A549 (cell line): ENCODE measurements at regions of chr2 and their contacts with region 1.

Region 1: DNA sequence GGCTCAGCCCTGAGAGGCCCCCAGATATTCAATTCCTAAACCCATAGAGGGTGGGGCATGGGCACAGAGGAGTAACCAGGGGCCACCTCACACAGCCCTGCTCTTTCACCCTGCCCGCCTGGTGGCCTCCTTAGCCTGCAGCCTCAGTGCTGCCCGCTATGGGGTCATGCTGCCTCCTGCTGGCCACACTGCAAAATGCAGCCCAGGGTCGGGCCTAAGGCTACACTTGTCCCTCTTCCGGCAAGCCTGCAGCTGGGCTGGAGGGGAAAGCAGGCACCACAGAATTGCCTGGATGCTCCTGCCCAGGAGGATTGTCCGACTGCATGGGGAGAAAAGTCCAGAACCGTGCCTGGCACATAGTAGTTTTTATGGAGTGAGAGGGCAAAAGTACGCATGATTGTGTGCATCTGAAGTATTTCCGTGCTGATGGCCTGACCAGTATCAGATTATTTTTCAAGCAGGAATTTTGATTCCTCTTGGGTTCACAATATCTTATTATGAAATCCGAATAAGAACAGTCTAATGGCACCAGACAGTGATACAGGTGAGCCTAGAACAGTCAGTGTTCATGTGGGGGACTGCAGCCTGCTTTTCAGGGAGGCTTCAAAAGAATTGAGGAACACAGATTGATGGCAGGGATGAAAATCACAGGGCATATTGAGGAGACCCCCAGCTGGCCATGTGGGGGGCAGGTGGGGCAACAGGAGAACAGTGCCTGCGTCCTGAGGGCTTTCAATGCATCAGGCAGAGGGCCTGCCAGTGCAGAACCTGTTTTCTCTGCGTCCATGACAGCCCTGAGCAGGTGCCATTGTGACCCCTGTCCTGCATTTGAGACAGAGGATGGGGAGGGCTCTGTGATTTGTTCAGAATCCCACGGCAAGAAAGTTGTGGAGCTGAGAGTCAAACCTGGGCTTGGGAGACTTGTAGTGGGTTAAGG is 51.2 kb upstream of the ALPP start:
- DNase-seq: peak; percentile 49 to 75
- ATAC-seq: peak; percentile 63 to 92
- H3K4me3 ChIP-seq: no peak overlapping the region
- H3K27ac ChIP-seq: no peak overlapping the region
- H3K4me1 ChIP-seq: no peaks in the 10 kb centered on the region
- CTCF ChIP-seq: peak; percentile 72
- EP300 ChIP-seq: no peak
- POLR2A ChIP-seq: no peak
- RAD21 ChIP-seq: peak; percentile 73 to 79

Region 2: GRCh38 chr2:232292395-232293154 is 34.8 kb before region 1 on chr2:
- CTCF ChIA-PET with region 1: interaction called, 20 read pairs
- POLR2A ChIA-PET with region 1: no interaction called
- DNase-seq: peak; percentile 47 to 64
- ATAC-seq: peak; percentile 82 to 95
- H3K4me3 ChIP-seq: no peak overlapping the region
- H3K27ac ChIP-seq: no peak overlapping the region
- H3K4me1 ChIP-seq: no peaks in the 10 kb centered on the region
- CTCF ChIP-seq: peak; percentile 62
- EP300 ChIP-seq: no peak
- POLR2A ChIP-seq: no peak
- RAD21 ChIP-seq: peak; percentile 36 to 49; a peak in 4 of 5 replicates

Region 3: DNA sequence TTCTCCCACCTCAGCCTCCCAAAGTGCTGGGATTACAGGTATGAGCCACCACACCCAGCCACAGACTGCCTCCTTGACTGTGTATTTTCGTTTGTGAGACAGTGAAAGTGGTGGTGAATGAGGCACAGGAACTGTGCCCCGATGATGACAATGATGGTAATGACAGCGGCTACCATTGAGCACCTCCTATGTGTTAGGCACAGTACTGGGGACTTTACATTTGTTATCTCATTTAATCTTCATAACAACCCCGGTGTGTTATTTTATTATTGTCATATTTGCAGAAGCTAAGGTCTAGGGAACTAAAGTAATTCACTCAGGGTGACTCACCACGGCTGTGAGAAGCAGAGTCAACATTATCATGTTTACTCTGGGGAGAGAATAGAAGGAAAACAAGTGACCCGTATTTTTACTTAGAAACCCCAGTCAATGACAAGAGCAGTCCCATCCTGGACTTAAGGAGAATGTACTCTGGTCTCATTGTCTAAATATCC is 26.4 kb before region 1 on chr2:
- CTCF ChIA-PET with region 1: interaction called, 10 read pairs
- POLR2A ChIA-PET with region 1: no interaction called
- DNase-seq: peak; percentile 77 to 88
- ATAC-seq: peak; percentile 98
- H3K4me3 ChIP-seq: 0 out of 3 replicates have a peak overlapping the region, but pooled peaks have one; percentile 17
- H3K27ac ChIP-seq: peak overlapping the region in 1 of 2 experiments; percentile 55; a peak in 3 of 6 replicates
- H3K4me1 ChIP-seq: peaks cover 21% of the 10 kb centered on the region
- CTCF ChIP-seq: peak; percentile 19; the same call in 1 of the 3 replicates
- EP300 ChIP-seq: no peak
- POLR2A ChIP-seq: no peak
- RAD21 ChIP-seq: no peak

Region 4: GRCh38 chr2:232315049-232315922 is 12.1 kb before region 1 on chr2:
- CTCF ChIA-PET with region 1: interaction called, 17 read pairs
- POLR2A ChIA-PET with region 1: no interaction called
- DNase-seq: no peak
- ATAC-seq: no peak; a peak in 1 of 6 replicates
- H3K4me3 ChIP-seq: no peak overlapping the region
- H3K27ac ChIP-seq: no peak overlapping the region
- H3K4me1 ChIP-seq: no peaks in the 10 kb centered on the region
- CTCF ChIP-seq: no peak
- EP300 ChIP-seq: no peak
- POLR2A ChIP-seq: no peak
- RAD21 ChIP-seq: no peak

Region 5: GRCh38 chr2:232339121-232340081 is 12.0 kb after region 1 on chr2:
- CTCF ChIA-PET with region 1: interaction called, 19 read pairs
- POLR2A ChIA-PET with region 1: no interaction called
- DNase-seq: no peak
- ATAC-seq: peak; percentile 26 to 57; a peak in 3 of 6 replicates
- H3K4me3 ChIP-seq: no peak overlapping the region
- H3K27ac ChIP-seq: no peak overlapping the region
- H3K4me1 ChIP-seq: no peaks in the 10 kb centered on the region
- CTCF ChIP-seq: no peak
- EP300 ChIP-seq: no peak
- POLR2A ChIP-seq: no peak
- RAD21 ChIP-seq: no peak

Region 6: DNA sequence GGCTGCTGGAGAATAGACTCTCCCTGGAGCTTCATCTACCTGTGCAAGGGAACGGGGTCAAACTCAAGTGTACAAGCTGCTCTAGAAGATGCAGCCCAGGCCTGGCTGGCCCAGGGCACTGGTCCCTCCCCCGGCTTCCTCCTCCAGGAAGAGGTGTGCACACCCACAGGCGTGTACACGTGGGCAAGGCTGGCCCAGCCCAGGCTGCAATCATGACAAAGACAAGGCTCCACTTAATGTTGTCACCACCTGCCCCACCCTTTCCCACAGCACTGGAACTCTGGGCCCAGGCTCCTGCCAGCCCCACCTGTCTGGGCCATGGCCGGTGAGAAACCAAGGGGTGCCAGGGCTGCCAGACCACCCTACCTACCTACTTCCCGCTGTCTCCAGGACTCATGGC is 21.6 kb after region 1 on chr2:
- CTCF ChIA-PET with region 1: interaction called, 12 read pairs
- POLR2A ChIA-PET with region 1: no interaction called
- DNase-seq: peak in 1 of 2 experiments; percentile 28
- ATAC-seq: peak; percentile 26 to 37; a peak in 4 of 6 replicates
- H3K4me3 ChIP-seq: no peak overlapping the region
- H3K27ac ChIP-seq: no peak overlapping the region
- H3K4me1 ChIP-seq: no peaks in the 10 kb centered on the region
- CTCF ChIP-seq: no peak
- EP300 ChIP-seq: no peak
- POLR2A ChIP-seq: no peak
- RAD21 ChIP-seq: no peak